Activated naive CD4-positive, alpha-beta T cell treated with anti-CD3 and anti-CD28 coated beads for 36 hours (primary cell): ENCODE measurements at regions of chr13 and their contacts with region 1.

Region 1: GRCh38 chr13:50081679-50082425 is 66.6 kb downstream of the KCNRG start:
- DNase-seq: peak; percentile 99
- H3K4me3 Mint-ChIP-seq: peak overlapping the region; percentile 100
- H3K27ac Mint-ChIP-seq: peak overlapping the region; percentile 100
- H3K4me1 Mint-ChIP-seq: peaks cover 27% of the 10 kb centered on the region
- H3K27me3 Mint-ChIP-seq: peaks cover 15% of the 10 kb centered on the region

Region 2: DNA sequence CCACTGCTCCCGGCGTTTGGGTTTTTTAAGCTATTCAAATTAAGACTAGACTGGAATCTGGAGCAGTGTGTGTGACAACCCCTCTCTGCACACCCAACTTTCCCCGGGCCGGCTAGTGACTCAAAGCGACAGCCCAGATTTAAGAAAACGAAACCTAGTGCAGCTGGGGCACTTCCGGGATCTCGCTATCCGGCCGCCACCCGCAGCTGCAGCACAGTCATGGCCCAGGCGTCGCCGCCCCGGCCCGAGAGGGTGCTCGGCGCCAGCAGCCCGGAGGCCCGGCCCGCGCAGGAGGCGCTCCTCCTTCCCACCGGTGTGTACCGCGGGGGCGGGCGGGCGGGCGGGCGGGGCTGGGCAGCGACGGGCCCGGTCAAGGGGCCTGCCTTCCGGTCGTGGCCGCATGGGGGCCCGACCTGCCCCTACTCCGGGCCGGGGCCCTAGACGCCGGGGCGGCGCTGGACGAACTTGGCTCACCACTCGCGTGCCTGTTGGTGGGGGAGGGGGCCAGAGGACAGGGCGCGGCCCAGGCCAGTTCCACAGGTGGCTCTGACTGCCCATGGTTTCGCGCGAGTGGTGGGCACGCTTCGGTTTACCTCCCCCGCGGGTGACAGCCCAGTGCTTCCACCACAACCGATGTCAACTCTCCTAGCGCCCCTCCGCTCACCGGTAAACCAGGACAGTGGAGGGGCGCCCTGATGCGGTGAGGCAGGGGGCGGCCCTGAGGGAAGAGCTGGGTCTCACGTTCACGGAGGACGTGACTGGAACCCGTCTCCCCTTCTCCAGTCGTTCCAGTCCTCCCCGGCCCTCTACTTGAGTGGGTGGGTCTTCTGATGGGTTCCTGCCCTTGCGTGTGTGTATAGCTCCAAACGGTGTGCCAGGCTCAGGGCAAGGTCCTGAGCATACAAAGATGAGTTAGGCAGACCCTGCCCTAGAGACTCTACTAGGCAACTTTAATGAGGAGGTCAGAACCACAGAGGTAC is 585.8 kb before region 1 on chr13 and contains the start of gene PHF11:
- CTCF ChIA-PET with region 1: no interaction called
- intact Hi-C with region 1: loop called (anchors 5 kb)
- DNase-seq: peak; percentile 95
- H3K4me3 Mint-ChIP-seq: peak within 1 kb of the TSS; percentile 91
- H3K27ac Mint-ChIP-seq: peak within 1 kb of the TSS; percentile 96
- H3K4me1 Mint-ChIP-seq: peaks cover 49% of the 10 kb centered on the region
- H3K27me3 Mint-ChIP-seq: no peaks in the 10 kb centered on the region
- total RNA-seq, gene PHF11: 91.4 to 96.9 TPM

Region 3: GRCh38 chr13:49996951-49997895 is 84.6 kb before region 1 on chr13 and contains the start of gene TRIM13:
- CTCF ChIA-PET with region 1: interaction called, 15 read pairs
- intact Hi-C with region 1: loop called (anchors 1 kb)
- DNase-seq: peak; percentile 90
- H3K4me3 Mint-ChIP-seq: peak within 1 kb of the TSS; percentile 79
- H3K27ac Mint-ChIP-seq: peak within 1 kb of the TSS; percentile 85
- H3K4me1 Mint-ChIP-seq: peaks cover 33% of the 10 kb centered on the region
- H3K27me3 Mint-ChIP-seq: no peaks in the 10 kb centered on the region
- total RNA-seq, gene TRIM13: 15.5 to 15.8 TPM

Region 4: DNA sequence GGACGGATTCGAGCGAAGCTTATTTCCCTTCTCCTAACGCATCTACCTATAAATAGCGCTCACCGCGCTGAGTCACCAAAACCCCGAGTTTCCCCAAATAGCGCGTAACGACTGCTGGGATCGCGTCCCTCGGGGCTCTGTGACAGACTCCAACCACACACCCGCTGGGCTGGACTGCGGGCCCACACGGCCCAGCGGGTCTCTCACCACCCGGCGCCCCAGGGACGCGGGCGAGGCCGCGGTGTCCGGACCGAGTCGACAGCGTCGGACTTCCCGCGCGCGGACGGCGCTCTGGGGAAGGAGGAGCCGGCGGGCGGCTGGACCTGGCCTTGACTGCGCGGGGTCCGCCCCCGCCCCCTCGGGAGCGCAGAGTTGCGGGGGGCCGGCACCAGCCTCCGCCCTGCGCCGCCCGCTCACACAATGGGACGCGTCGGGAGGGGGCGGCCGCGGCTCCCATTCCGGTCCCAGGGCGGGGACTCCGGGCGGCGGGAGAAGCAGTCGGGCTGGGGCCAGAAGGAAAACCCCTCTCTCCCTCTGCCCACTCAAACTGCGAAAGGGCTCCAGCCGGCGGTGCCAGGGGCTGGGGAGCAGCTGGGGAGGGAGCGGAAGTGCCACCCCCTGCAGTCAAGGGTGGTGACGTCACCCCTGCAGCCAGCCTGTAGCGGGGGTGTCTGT is 42.1 kb after region 1 on chr13:
- CTCF ChIA-PET with region 1: interaction called, 44 read pairs
- intact Hi-C with region 1: loop called (anchors 1 kb)
- DNase-seq: peak; percentile 89
- H3K4me3 Mint-ChIP-seq: peak overlapping the region; percentile 77
- H3K27ac Mint-ChIP-seq: peak overlapping the region; percentile 92
- H3K4me1 Mint-ChIP-seq: peaks cover 48% of the 10 kb centered on the region
- H3K27me3 Mint-ChIP-seq: peaks cover 15% of the 10 kb centered on the region

Region 5: DNA sequence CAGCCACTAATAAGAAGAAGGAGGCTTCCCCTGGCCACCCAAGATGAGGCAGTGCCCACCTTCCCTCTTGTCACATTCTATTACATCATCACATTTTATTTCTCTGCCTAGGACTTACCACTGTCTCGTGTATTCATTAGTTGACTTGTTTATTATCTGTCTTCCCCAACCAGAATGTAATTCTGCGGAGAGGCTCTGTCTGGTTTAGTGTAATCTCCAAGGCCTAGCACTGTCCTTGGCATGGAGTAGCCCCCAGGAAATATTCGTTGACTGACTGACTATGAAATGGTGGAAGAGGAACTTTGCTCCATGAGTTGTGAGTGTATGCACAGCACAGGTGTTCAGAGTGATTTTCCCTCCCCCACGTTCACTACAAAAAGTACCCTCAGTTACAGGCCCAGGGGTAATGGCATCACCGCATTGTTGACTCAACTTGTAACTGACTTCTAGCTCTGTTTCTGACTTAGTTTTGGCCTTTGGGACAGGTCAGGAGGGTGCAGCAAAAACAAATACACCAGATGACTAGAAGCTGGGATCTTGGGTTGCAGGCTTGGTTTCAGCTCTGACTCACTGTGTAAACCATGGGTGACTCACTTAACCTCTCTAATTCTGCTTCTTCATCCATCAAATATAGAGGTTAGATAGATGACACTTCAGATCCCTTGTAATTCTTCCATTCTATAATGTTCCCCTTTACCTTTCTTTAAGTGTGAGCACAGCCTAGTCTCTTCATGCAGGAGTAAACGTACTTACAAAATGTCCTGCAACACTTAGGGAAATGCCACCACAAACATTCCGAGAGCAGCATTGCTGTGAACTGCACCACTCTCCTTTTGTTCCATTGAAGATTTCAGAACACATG is 163.1 kb after region 1 on chr13:
- CTCF ChIA-PET with region 1: no interaction called
- intact Hi-C with region 1: loop called (anchors 2 kb)
- DNase-seq: peak; percentile 84
- H3K4me3 Mint-ChIP-seq: no peak overlapping the region
- H3K27ac Mint-ChIP-seq: peak overlapping the region; percentile 72
- H3K4me1 Mint-ChIP-seq: peaks cover 30% of the 10 kb centered on the region
- H3K27me3 Mint-ChIP-seq: peaks cover 13% of the 10 kb centered on the region

Region 6: GRCh38 chr13:50529154-50529882 is 447.5 kb after region 1 on chr13:
- CTCF ChIA-PET with region 1: interaction called, 3 read pairs
- intact Hi-C with region 1: loop called (anchors 2 kb)
- DNase-seq: peak; percentile 49
- H3K4me3 Mint-ChIP-seq: no peak overlapping the region
- H3K27ac Mint-ChIP-seq: no peak overlapping the region
- H3K4me1 Mint-ChIP-seq: peaks cover 18% of the 10 kb centered on the region
- H3K27me3 Mint-ChIP-seq: peaks cover 13% of the 10 kb centered on the region

Region 7: GRCh38 chr13:50911937-50912795 is 830.3 kb after region 1 on chr13:
- CTCF ChIA-PET with region 1: interaction called, 14 read pairs
- intact Hi-C with region 1: loop called (anchors 1 kb)
- DNase-seq: peak; percentile 97
- H3K4me3 Mint-ChIP-seq: peak overlapping the region; percentile 94
- H3K27ac Mint-ChIP-seq: peak overlapping the region; percentile 75
- H3K4me1 Mint-ChIP-seq: peaks cover 46% of the 10 kb centered on the region
- H3K27me3 Mint-ChIP-seq: no peaks in the 10 kb centered on the region